A673 (cell line): ENCODE measurements at regions of chr22 and their contacts with region 1.

Region 1: DNA sequence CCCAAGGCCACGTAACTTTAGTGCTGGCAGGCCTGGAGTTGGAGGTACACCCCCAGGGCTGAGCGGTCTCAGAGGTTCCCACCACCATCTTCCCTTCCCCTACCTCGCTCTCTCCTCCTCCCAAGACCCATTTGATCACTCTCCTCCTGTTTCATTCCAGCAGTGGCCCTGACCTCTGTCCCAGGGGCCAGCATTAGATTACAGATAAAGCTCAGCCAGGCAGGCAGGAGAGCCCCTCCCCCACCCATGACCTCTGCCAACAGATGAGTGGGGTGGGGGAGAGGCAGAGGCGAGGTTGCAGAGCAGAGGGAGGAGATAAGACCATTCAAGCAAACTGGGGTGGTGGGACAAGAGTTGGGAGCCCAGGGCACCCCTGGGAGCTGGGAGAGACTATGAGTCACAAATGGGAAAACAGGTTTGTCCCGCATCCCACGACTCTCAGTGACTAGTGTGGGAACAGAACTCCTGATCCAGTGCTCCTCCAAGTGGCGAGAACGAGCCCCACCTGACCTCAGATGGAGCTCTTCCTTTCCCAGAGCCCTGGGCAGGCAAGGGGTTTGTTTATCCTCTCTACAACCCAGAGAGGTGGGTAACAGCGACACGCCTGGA is 367.9 kb downstream of the MN1 start:
- DNase-seq: no peak
- H3K4me3 ChIP-seq: no peak overlapping the region
- H3K27ac ChIP-seq: no peak overlapping the region
- H3K4me1 ChIP-seq: peaks cover 16% of the 10 kb centered on the region
- H3K27me3 ChIP-seq: no peaks in the 10 kb centered on the region
- CTCF ChIP-seq: no peak

Region 2: DNA sequence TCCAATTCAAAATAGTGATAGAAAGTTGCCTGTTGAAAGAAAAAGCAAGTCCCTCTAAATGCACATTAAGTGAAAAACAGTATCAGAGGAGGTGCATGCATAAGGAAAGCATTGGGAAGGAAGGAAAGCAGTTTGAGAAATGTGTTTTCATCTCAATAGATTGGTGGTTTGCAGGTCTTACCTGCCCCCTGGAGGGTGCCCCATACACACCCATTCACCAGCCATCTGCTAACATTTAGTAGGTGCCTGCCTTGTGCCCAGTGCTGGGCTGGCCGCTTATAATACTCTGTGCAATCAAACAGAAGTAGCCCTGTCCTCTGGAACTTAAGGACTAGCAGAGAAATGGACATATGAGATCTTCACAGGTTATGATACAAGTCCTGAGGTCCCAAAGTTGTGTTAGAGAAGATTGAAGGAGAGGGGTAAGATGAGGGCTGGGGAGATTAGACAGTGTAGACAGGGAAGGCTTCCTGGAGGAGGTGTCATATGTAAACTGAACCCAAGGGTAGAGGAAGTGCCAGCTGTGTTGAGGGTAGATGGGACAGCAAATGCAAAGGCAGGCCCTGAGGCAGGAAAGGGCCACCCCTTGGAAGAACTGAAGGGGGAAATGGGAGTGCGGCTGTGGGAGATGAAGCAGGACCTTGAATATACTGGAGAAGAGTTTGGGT is 183.7 kb after region 1 on chr22:
- CTCF ChIA-PET with region 1: no interaction called
- POLR2A ChIA-PET with region 1: interaction called, 10 read pairs
- intact Hi-C with region 1: no loop called
- DNase-seq: no peak
- H3K4me3 ChIP-seq: no peak overlapping the region
- H3K27ac ChIP-seq: no peak overlapping the region
- H3K4me1 ChIP-seq: peaks cover 1% of the 10 kb centered on the region
- H3K27me3 ChIP-seq: no peaks in the 10 kb centered on the region
- CTCF ChIP-seq: no peak